ENCODE measurements at regions of chr22 and their contacts with region 1.

Region 1: DNA sequence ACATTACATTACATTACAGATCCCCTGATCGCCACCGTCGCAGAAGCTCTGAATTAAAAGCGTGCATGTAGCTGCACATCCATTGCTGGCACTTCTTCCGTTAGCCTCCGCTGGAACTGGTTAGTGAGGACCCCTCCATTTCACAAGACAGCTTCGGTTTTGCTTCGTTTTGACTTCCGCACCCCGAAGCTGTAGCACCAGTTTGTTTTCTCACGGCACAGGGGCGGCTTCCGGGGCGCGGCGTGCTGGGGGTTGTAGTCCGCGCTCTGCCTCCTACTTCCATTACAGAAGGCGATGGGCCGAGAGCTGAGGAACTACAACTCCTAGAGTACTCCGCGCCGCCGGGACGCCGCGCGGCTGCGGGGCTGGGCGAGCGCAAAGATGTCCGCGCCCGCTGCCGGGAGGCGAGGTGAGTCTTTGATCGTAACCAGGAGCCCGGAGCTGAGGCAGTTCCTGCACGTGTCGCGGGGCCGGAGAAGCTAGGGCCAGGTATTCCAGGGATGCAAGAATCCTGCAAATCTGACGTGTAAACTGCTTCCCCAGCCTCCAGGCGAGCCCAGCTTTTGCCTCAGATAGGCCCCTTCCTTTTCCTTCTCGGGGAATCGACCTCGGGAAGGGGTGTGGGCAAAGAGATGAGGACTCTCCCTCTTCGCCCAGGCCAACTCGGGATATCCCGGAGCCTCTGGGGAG is at the start of gene PEX26:
- DNase-seq: peak; percentile 97
- ATAC-seq: peak; percentile 99
- H3K4me3 ChIP-seq: peak within 1 kb of the TSS; percentile 70 to 97 (median 92)
- H3K4me3 Mint-ChIP-seq: peak within 1 kb of the TSS; percentile 97
- H3K27ac ChIP-seq: peak within 1 kb of the TSS; percentile 75 to 89
- H3K27ac Mint-ChIP-seq: peak within 1 kb of the TSS; percentile 96
- H3K4me1 ChIP-seq: peaks cover 31 to 32% of the 10 kb centered on the region in 2 donors
- H3K4me1 Mint-ChIP-seq: peaks cover 44% of the 10 kb centered on the region
- H3K27me3 ChIP-seq: no peaks in the 10 kb centered on the region
- H3K27me3 Mint-ChIP-seq: no peaks in the 10 kb centered on the region
- CTCF ChIP-seq: no peak
- total RNA-seq, gene PEX26: 33.4 and 35.4 TPM in 2 replicates

Region 2: DNA sequence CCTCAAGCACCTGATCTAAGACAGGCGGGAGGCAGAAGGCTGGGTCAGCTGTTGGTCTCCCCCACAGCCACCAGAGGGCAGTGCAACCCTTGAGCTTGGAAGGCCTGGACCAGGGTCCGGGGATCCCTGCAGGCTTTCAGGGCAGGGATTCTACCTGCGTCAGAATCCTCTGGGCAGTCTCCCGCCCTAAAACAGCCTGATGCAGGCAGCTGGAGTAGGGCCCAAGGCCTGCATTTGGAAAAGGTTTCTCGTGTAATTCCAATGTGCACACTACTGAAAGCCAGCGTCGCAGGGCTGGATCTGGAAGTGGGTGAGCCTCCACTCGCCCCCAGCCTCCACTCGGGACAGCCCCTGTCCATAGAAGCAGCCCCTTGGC is 335.3 kb before region 1 on chr22:
- CTCF ChIA-PET with region 1: interaction called, 58 read pairs
- POLR2A ChIA-PET with region 1: no interaction called
- intact Hi-C with region 1: loop called (anchors 1 kb)
- DNase-seq: peak; percentile 85
- ATAC-seq: peak; percentile 94
- H3K4me3 ChIP-seq: no peak overlapping the region
- H3K4me3 Mint-ChIP-seq: no peak overlapping the region
- H3K27ac ChIP-seq: no peak overlapping the region
- H3K27ac Mint-ChIP-seq: peak overlapping the region; percentile 26
- H3K4me1 ChIP-seq: peaks cover 0 to 6% of the 10 kb centered on the region in 2 donors
- H3K4me1 Mint-ChIP-seq: peaks cover 8% of the 10 kb centered on the region
- H3K27me3 ChIP-seq: no peaks in the 10 kb centered on the region
- H3K27me3 Mint-ChIP-seq: no peaks in the 10 kb centered on the region
- CTCF ChIP-seq: peak; percentile 75

Region 3: DNA sequence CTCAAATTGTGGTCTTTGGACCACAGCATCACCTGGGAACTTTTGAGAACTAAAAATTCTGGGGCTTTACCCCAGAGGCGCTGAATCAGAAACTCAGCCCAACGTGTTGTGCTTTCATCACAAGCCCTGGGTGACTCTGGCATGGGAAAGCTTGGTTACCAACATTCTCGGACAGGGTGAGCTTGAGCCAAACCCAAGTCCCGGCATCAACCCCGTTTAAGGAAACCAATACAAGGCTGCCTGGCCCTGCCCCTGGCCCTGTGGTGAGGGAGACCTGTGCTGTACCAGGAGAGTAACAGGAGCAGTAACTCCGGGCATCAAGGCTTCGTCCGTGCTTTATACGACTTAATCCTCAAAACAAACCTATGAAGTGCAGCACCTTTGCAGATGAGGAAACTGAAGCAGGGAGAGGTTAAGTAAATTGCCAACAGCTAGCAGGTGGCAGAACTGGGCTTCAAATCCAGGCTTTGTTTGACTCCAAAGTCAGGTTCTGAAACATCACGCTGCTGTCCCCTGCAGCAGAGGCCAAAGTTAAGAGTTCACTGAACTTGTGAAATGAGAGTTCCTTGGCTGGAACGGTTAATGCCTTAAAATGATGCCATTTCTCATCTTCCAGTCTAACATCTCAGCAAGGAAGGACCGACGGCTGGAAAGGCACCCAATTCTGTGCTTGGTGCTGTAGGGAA is 239.5 kb before region 1 on chr22:
- CTCF ChIA-PET with region 1: interaction called, 250 read pairs
- POLR2A ChIA-PET with region 1: no interaction called
- intact Hi-C with region 1: no loop called
- DNase-seq: no peak
- ATAC-seq: no peak
- H3K4me3 ChIP-seq: no peak overlapping the region
- H3K4me3 Mint-ChIP-seq: no peak overlapping the region
- H3K27ac ChIP-seq: no peak overlapping the region
- H3K27ac Mint-ChIP-seq: no peak overlapping the region
- H3K4me1 ChIP-seq: no peaks in the 10 kb centered on the region
- H3K4me1 Mint-ChIP-seq: no peaks in the 10 kb centered on the region
- H3K27me3 ChIP-seq: no peaks in the 10 kb centered on the region
- H3K27me3 Mint-ChIP-seq: no peaks in the 10 kb centered on the region
- CTCF ChIP-seq: no peak

Region 4: GRCh38 chr22:17920145-17920605 is 157.6 kb before region 1 on chr22:
- CTCF ChIA-PET with region 1: interaction called, 60 read pairs
- POLR2A ChIA-PET with region 1: no interaction called
- intact Hi-C with region 1: loop called (anchors 1 kb)
- DNase-seq: peak; percentile 54
- ATAC-seq: peak; percentile 47
- H3K4me3 ChIP-seq: no peak overlapping the region
- H3K4me3 Mint-ChIP-seq: peak overlapping the region; percentile 62
- H3K27ac ChIP-seq: peak overlapping the region in 1 of 2 donors; percentile 78
- H3K27ac Mint-ChIP-seq: peak overlapping the region; percentile 78
- H3K4me1 ChIP-seq: peaks cover 85 to 95% of the 10 kb centered on the region in 2 donors
- H3K4me1 Mint-ChIP-seq: peaks cover 5% of the 10 kb centered on the region
- H3K27me3 ChIP-seq: no peaks in the 10 kb centered on the region
- H3K27me3 Mint-ChIP-seq: no peaks in the 10 kb centered on the region
- CTCF ChIP-seq: peak; percentile 35

Region 5: GRCh38 chr22:18001040-18001893 is 76.5 kb before region 1 on chr22:
- CTCF ChIA-PET with region 1: interaction called, 133 read pairs
- POLR2A ChIA-PET with region 1: interaction called, 26 read pairs
- intact Hi-C with region 1: loop called (anchors 1 kb)
- DNase-seq: peak; percentile 94
- ATAC-seq: peak; percentile 68
- H3K4me3 ChIP-seq: peak overlapping the region; percentile 56 to 87 (median 70)
- H3K4me3 Mint-ChIP-seq: peak overlapping the region; percentile 96
- H3K27ac ChIP-seq: peak overlapping the region; percentile 87 to 95
- H3K27ac Mint-ChIP-seq: peak overlapping the region; percentile 100
- H3K4me1 ChIP-seq: peaks cover 78 to 83% of the 10 kb centered on the region in 2 donors
- H3K4me1 Mint-ChIP-seq: peaks cover 77% of the 10 kb centered on the region
- H3K27me3 ChIP-seq: no peaks in the 10 kb centered on the region
- H3K27me3 Mint-ChIP-seq: no peaks in the 10 kb centered on the region
- CTCF ChIP-seq: peak; percentile 60

Region 6: GRCh38 chr22:18065256-18065655 is 12.5 kb before region 1 on chr22:
- CTCF ChIA-PET with region 1: interaction called, 38 read pairs
- POLR2A ChIA-PET with region 1: interaction called, 4 read pairs
- intact Hi-C with region 1: no loop called
- DNase-seq: no peak
- ATAC-seq: peak; percentile 32
- H3K4me3 ChIP-seq: no peak overlapping the region
- H3K4me3 Mint-ChIP-seq: peak overlapping the region; percentile 79
- H3K27ac ChIP-seq: no peak overlapping the region
- H3K27ac Mint-ChIP-seq: peak overlapping the region; percentile 87
- H3K4me1 ChIP-seq: peaks cover 44 to 55% of the 10 kb centered on the region in 2 donors
- H3K4me1 Mint-ChIP-seq: peaks cover 61% of the 10 kb centered on the region
- H3K27me3 ChIP-seq: no peaks in the 10 kb centered on the region
- H3K27me3 Mint-ChIP-seq: no peaks in the 10 kb centered on the region
- CTCF ChIP-seq: no peak

Measured in B cell (primary cell).